ENCODE measurements at regions of chr13 and their contacts with region 1.

Region 1: DNA sequence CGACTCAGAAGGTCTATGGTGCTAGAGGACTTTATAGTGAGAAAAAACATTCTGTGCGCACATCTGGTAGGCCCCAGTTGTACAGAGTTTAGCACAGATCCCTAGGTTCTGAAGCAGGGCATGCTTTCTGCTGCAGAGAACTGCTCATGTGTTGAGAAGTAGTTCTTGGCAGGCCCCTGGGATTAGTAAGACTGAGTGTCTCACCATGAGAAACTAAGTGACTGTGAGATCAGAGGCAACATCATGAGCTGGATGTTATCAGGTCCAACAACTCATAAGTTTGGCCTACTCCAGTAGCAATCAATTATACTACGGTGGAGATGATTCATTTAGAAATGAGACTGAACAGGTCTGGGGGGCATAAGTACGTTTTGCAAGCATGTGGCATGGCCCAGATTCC is 507.4 kb upstream of the KLF12 start:
- DNase-seq: no peak
- ATAC-seq: no peak
- H3K4me3 ChIP-seq: no peak overlapping the region
- H3K4me3 Mint-ChIP-seq: no peak overlapping the region
- H3K27ac ChIP-seq: no peak overlapping the region
- H3K27ac Mint-ChIP-seq: no peak overlapping the region
- H3K4me1 ChIP-seq: no peaks in the 10 kb centered on the region
- H3K4me1 Mint-ChIP-seq: peaks cover 0 to 2% (median 0%) of the 10 kb centered on the region in 3 donors
- H3K27me3 ChIP-seq: no peaks in the 10 kb centered on the region
- H3K27me3 Mint-ChIP-seq: peaks cover under 1 to 6% of the 10 kb centered on the region in 2 donors

Region 2: DNA sequence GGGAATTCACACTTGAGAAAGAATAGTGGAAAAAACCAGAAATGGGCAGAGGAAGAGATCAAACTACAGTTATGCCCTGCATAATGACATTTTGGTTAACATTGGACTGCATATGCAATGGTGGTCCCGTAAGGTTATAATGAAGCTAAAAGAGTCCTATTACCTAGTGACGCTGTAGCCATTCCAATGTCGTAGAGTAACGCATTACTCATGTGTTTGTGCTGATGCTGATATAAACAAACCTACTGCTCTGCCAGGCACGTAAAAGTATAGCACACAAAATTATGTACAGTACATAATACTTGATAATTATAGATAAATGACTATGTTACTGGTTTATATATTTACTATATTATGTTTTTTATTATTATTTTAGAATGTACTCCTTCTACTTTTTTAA is 1461.7 kb before region 1 on chr13:
- CTCF ChIA-PET with region 1: no interaction called
- POLR2A ChIA-PET with region 1: interaction called in 1 of 2 experiments, 11 read pairs
- DNase-seq: no peak
- ATAC-seq: no peak
- H3K4me3 ChIP-seq: no peak overlapping the region
- H3K4me3 Mint-ChIP-seq: no peak overlapping the region
- H3K27ac ChIP-seq: no peak overlapping the region
- H3K27ac Mint-ChIP-seq: no peak overlapping the region
- H3K4me1 ChIP-seq: no peaks in the 10 kb centered on the region
- H3K4me1 Mint-ChIP-seq: no peaks in the 10 kb centered on the region
- H3K27me3 ChIP-seq: peaks cover 0 to 2% of the 10 kb centered on the region in 2 experiments
- H3K27me3 Mint-ChIP-seq: no peaks in the 10 kb centered on the region

Measured in T-cell (primary cell).